ENCODE measurements at regions of chr18 and their contacts with region 1.

Region 1: GRCh38 chr18:3281456-3282400 is 19.8 kb downstream of the MYL12B start:
- DNase-seq: no peak
- ATAC-seq: peak; percentile 90
- H3K4me3 ChIP-seq: no peak overlapping the region
- H3K27ac ChIP-seq: no peak overlapping the region
- H3K4me1 ChIP-seq: no peaks in the 10 kb centered on the region
- H3K27me3 ChIP-seq: no peaks in the 10 kb centered on the region

Region 2: GRCh38 chr18:3217948-3218647 is 63.6 kb before region 1 on chr18:
- intact Hi-C with region 1: no loop called
- DNase-seq: no peak
- ATAC-seq: no peak
- H3K4me3 ChIP-seq: peak overlapping the region; percentile 6 to 33
- H3K27ac ChIP-seq: peak overlapping the region in 1 of 2 donors; percentile 8
- H3K4me1 ChIP-seq: peaks cover 0 to 5% of the 10 kb centered on the region in 2 donors
- H3K27me3 ChIP-seq: no peaks in the 10 kb centered on the region

Region 3: DNA sequence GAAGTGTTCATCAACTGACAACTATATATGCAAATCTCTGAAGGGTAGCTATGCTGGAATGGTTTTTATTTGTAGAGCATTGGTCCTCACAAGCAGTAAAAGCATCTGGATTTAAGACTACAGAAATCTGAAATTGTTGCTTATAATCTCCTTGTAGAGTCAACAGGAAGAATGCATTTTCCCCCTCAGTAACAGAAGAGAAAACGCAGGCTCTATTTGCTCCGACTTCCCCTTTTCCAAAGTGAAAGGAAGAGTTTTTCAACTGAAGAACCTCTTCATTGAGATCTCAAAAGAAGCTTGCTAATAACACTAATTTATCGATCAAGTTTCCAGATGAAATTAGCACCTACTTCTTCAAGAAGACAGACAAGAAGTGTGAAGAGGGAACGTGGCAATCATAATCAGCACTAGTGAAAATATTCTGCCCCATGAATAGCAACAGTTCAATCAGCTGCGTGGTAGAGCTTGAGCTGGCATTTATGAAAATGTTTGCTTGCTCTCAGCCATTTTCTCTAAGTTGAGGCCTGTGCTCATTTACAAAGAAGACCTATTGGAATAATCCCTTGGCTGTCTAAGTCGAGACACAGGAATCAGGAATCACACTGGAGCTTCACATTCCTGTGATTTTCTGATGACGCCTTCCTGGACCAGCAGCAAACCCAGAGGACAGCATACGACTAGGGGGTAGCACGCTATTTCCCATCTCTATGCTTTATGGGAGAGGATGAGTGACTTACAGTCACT is 211.9 kb after region 1 on chr18:
- intact Hi-C with region 1: loop called in 1 of 2 experiments (anchors 5 kb)
- DNase-seq: no peak
- ATAC-seq: no peak
- H3K4me3 ChIP-seq: no peak overlapping the region
- H3K27ac ChIP-seq: no peak overlapping the region
- H3K4me1 ChIP-seq: no peaks in the 10 kb centered on the region
- H3K27me3 ChIP-seq: peaks cover 0 to 2% of the 10 kb centered on the region in 2 donors

Region 4: GRCh38 chr18:3665780-3666525 is 384.2 kb after region 1 on chr18:
- intact Hi-C with region 1: loop called (anchors 1 to 2 kb)
- DNase-seq: peak; percentile 84 to 92
- ATAC-seq: peak; percentile 95
- H3K4me3 ChIP-seq: no peak overlapping the region
- H3K27ac ChIP-seq: peak overlapping the region; percentile 13 to 30
- H3K4me1 ChIP-seq: no peaks in the 10 kb centered on the region
- H3K27me3 ChIP-seq: no peaks in the 10 kb centered on the region

Region 5: GRCh38 chr18:3995476-3996102 is 713.9 kb after region 1 on chr18:
- intact Hi-C with region 1: loop called (anchors 10 kb)
- DNase-seq: peak in 1 of 2 donors; percentile 58
- ATAC-seq: no peak
- H3K4me3 ChIP-seq: peak overlapping the region; percentile 12 to 48
- H3K27ac ChIP-seq: no peak overlapping the region
- H3K4me1 ChIP-seq: no peaks in the 10 kb centered on the region
- H3K27me3 ChIP-seq: no peaks in the 10 kb centered on the region